MCF 10A (cell line): ENCODE measurements at regions of chr10 and their contacts with region 1.

Region 1: DNA sequence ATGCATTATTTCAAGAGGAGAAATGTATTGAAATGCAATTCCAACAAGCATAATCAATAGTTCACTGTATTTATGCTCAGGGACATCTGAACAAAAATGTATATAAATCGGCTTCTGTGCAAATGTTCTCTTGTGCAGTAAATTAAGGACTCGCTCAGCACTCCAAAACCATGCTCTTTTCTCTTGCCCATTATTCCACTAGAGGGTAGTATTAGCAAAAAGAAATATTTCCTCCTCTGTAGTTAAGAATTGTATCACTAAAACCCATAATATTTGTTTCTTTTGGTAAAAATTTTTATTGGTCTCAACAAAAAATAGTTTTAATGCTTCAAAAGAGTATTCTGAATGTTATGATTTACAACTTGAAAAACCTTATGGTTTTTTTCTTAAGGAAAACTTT is 803.1 kb downstream of the PCDH15 start:
- DNase-seq: peak; percentile 26
- H3K4me3 Mint-ChIP-seq: no peak overlapping the region
- H3K27ac Mint-ChIP-seq: no peak overlapping the region
- H3K4me1 Mint-ChIP-seq: no peaks in the 10 kb centered on the region
- H3K27me3 Mint-ChIP-seq: no peaks in the 10 kb centered on the region
- CTCF ChIP-seq: peak; percentile 41

Region 2: GRCh38 chr10:53314876-53315275 is 683.1 kb before region 1 on chr10:
- CTCF ChIA-PET with region 1: no interaction called
- POLR2A ChIA-PET with region 1: no interaction called
- intact Hi-C with region 1: loop called (anchors 5 kb)
- DNase-seq: peak; percentile 86
- H3K4me3 Mint-ChIP-seq: no peak overlapping the region
- H3K27ac Mint-ChIP-seq: peak overlapping the region; percentile 16
- H3K4me1 Mint-ChIP-seq: peaks cover 6% of the 10 kb centered on the region
- H3K27me3 Mint-ChIP-seq: no peaks in the 10 kb centered on the region
- CTCF ChIP-seq: no peak

Region 3: DNA sequence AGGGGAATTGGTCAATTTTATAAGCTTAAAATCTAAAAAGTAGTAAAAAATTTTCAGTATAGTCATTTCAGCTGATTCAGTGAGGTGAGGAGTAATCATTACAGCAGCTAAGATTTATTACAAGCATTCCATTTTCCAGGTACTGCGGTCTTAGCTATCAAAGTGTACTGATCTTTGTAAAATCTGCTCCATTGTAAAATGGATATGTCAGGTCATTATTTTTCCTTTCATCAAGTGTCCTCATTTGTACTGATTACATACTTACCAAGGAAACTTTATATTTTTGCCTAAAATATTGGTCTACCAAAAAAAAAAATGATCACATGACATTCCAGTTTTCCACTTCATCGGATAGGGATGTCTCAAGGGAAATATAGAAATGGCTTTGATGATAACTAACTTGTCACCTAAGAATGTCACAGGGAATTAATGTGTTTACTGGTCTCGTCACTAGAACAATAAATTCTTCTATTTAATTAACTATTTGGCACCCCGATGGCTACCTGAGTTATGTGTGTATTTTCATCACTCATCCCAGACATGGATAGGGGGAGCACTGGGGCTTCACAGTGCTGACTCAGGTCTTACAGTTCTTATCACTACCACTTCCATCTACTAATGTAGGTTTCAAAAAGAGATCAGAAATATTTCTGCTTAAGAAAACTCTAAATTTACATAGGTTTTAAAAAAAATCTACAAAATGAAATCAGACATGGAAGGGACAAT is 145.3 kb before region 1 on chr10:
- CTCF ChIA-PET with region 1: no interaction called
- POLR2A ChIA-PET with region 1: no interaction called
- intact Hi-C with region 1: no loop called
- DNase-seq: no peak
- H3K4me3 Mint-ChIP-seq: no peak overlapping the region
- H3K27ac Mint-ChIP-seq: no peak overlapping the region
- H3K4me1 Mint-ChIP-seq: no peaks in the 10 kb centered on the region
- H3K27me3 Mint-ChIP-seq: no peaks in the 10 kb centered on the region
- CTCF ChIP-seq: no peak

Region 4: GRCh38 chr10:54009672-54010071 is 11.7 kb after region 1 on chr10:
- CTCF ChIA-PET with region 1: interaction called, 15 read pairs
- POLR2A ChIA-PET with region 1: no interaction called
- intact Hi-C with region 1: no loop called
- DNase-seq: no peak
- H3K4me3 Mint-ChIP-seq: no peak overlapping the region
- H3K27ac Mint-ChIP-seq: no peak overlapping the region
- H3K4me1 Mint-ChIP-seq: no peaks in the 10 kb centered on the region
- H3K27me3 Mint-ChIP-seq: no peaks in the 10 kb centered on the region
- CTCF ChIP-seq: no peak

Region 5: DNA sequence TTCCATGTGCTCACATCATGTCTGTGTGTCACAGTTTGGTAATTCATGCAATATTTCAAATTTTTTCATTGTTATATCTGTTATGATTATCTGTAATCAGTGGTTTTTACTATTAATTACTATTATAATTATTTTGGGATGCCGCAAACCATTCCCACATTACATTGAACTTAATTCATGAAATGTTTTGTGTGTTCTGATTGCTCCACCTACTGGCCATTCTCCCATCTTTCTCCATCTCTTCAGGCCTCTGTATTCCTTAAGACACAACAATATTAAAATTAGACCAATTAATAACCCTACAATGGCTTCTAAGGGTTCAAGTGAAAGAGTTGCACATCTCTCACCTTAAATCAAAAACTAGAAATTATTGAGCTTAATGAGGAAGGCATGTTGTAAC is 404.6 kb after region 1 on chr10:
- CTCF ChIA-PET with region 1: interaction called, 7 read pairs
- POLR2A ChIA-PET with region 1: no interaction called
- intact Hi-C with region 1: loop called (anchors 1 kb)
- DNase-seq: peak; percentile 59
- H3K4me3 Mint-ChIP-seq: no peak overlapping the region
- H3K27ac Mint-ChIP-seq: no peak overlapping the region
- H3K4me1 Mint-ChIP-seq: no peaks in the 10 kb centered on the region
- H3K27me3 Mint-ChIP-seq: no peaks in the 10 kb centered on the region
- CTCF ChIP-seq: peak; percentile 62

Region 6: GRCh38 chr10:54478601-54479000 is 480.6 kb after region 1 on chr10:
- CTCF ChIA-PET with region 1: no interaction called
- POLR2A ChIA-PET with region 1: no interaction called
- intact Hi-C with region 1: no loop called
- DNase-seq: no peak
- H3K4me3 Mint-ChIP-seq: no peak overlapping the region
- H3K27ac Mint-ChIP-seq: no peak overlapping the region
- H3K4me1 Mint-ChIP-seq: no peaks in the 10 kb centered on the region
- H3K27me3 Mint-ChIP-seq: no peaks in the 10 kb centered on the region
- CTCF ChIP-seq: no peak

Region 7: DNA sequence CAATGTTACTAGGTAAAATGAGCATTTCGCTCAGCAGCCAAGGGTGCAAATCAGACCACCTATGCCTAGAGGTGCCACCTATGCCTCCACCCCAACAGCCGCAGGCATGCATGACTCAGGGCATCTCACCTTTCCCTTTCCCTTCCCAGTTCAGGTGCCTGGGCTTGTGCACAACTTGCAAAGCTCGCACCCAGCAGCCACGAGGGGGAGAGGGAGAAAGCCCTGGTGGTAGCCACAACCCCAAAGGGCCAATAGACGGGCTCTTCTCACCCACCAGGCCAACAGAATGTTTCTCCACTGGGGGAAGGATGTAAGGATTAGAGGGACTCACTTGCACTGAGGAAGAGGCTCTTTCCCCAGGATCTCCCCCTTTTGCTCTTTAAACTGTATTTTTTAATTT is 1265.4 kb after region 1 on chr10:
- CTCF ChIA-PET with region 1: interaction called, 3 read pairs
- POLR2A ChIA-PET with region 1: no interaction called
- intact Hi-C with region 1: loop called (anchors 5 kb)
- DNase-seq: no peak
- H3K4me3 Mint-ChIP-seq: no peak overlapping the region
- H3K27ac Mint-ChIP-seq: no peak overlapping the region
- H3K4me1 Mint-ChIP-seq: no peaks in the 10 kb centered on the region
- H3K27me3 Mint-ChIP-seq: peaks cover 66% of the 10 kb centered on the region
- CTCF ChIP-seq: no peak